ENCODE measurements at regions of chr19 and their contacts with region 1.

Region 1: DNA sequence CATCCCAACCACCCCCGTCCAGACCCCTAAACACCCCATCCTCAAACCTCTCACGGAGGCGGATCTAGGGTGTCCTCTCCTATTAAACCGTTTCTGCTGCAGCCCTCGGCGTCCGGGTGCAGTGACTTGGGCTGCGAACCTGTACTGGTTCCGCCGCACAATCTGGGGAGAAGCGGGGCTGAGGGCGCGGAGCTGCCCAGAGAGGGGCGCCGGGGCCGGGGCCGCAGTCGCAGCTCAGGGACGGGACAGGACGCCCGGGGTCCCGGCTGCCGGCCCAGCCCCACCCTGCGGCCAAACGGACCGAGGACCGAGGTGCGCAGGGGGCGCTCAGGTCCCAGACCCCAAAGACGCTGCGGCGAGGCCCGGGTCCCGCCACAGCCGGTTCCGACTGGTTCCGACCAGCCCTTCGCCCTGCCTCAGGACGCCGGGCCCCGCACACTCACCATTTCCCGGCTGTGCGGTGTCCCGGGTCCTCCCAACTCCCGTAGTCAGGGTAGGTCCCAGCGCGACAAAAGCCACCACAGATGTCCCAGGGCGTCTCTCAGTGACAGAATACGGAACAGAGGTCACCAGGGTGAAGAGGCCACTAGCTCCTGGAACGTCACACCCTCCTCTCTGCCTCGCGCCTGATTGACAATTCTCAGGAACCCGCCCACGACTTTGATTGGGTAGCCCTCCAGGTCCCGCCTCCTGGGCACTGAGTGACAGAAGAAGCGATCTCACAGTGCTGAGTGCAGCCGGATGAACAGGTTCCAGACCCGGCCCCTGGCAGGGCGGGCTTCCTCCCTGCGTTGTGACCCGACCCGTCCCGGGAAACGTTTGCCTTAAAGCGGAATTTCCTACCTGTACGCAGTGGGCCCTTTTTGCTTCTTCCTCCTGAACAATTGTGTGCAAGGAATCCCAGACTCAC is at the start of gene ZNF44:
- DNase-seq: peak; percentile 94
- ATAC-seq: peak; percentile 96
- H3K4me3 ChIP-seq: peak within 1 kb of the TSS; percentile 68 to 88
- H3K27ac ChIP-seq: peak within 1 kb of the TSS; percentile 62
- H3K4me1 ChIP-seq: peaks cover 5 to 18% of the 10 kb centered on the region in 2 experiments
- H3K27me3 ChIP-seq: no peaks in the 10 kb centered on the region
- CTCF ChIP-seq: no peak
- POLR2A ChIP-seq: no peak
- RAD21 ChIP-seq: no peak
- total RNA-seq, gene ZNF44: 3.6 TPM

Region 2: DNA sequence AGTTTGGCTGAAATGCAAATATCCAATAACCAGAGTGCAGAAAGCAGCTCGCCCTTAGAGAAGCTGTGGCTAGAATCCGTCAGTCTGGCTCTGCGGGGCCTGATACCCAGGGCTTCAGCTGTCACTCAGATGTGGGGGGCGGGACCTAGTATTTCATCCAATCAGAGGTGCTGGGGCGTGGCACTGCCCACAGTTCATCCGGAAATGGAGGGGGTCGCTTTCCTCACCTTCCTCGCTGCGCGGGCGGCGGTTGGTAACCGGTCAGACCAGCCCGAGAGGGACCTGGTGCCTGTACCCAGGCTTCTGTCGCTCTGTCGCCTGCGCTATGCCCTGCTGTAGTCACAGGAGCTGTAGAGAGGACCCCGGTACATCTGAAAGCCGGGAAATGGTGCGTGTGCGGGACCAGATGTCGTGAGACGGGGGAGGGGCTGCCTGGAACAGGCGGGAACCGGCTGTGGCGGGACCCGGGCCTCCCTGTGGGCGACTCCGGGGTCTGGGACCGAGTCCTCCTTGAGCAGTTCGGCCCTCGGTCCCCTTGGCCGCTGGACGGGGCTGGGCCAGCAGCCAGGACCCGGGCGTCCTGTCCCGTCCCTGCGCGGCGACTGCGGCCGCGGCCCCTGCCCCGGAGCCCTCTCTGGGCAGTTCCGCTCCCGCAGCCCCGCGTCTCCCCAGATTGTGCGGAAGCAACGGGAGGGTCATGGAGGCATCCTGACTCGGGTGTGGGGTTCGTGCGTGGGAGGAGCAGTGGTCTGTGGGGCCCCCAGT is 369.4 kb before region 1 on chr19 and contains the start of gene ZNF700:
- CTCF ChIA-PET with region 1: no interaction called
- POLR2A ChIA-PET with region 1: no interaction called
- RAD21 ChIA-PET with region 1: no interaction called
- intact Hi-C with region 1: loop called (anchors 5 kb)
- DNase-seq: peak; percentile 85
- ATAC-seq: peak; percentile 94
- H3K4me3 ChIP-seq: peak within 1 kb of the TSS; percentile 79 to 86
- H3K27ac ChIP-seq: peak within 1 kb of the TSS; percentile 94
- H3K4me1 ChIP-seq: peaks cover 0 to 22% of the 10 kb centered on the region in 2 experiments; a peak in 2 of 4 replicates
- H3K27me3 ChIP-seq: no peaks in the 10 kb centered on the region
- CTCF ChIP-seq: no peak
- POLR2A ChIP-seq: no peak
- RAD21 ChIP-seq: no peak
- total RNA-seq, gene ZNF700: 9.3 TPM

Region 3: GRCh38 chr19:12162882-12163806 is 131.4 kb before region 1 on chr19 and contains the start of gene ZNF136:
- CTCF ChIA-PET with region 1: no interaction called
- POLR2A ChIA-PET with region 1: no interaction called
- RAD21 ChIA-PET with region 1: no interaction called
- intact Hi-C with region 1: loop called (anchors 5 kb)
- DNase-seq: peak; percentile 89
- ATAC-seq: peak; percentile 98
- H3K4me3 ChIP-seq: peak within 1 kb of the TSS; percentile 76 to 80
- H3K27ac ChIP-seq: peak within 1 kb of the TSS; percentile 64
- H3K4me1 ChIP-seq: peaks cover 0 to 3% of the 10 kb centered on the region in 2 experiments; a peak in 1 of 4 replicates
- H3K27me3 ChIP-seq: no peaks in the 10 kb centered on the region
- CTCF ChIP-seq: no peak
- POLR2A ChIP-seq: no peak
- RAD21 ChIP-seq: no peak
- total RNA-seq, gene ZNF136: 4.0 TPM

Region 4: DNA sequence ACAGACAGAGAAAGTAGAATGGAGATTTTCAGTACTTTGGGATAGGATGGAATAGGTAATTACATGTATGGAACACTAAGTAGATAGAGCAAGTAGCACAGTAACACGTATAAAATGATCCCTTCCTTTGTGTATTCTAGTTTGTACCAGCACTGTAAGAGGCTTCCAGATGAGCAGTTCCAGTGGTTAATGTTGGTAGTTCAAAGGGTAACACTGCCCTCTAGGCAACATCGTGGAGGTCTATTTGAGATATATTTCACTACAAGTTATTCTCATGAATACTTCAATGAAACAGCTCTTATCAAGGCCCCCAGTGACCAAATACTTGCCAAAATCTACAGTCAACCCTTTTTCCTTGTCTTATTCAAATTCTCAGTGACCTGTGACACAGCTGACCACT is 52.4 kb after region 1 on chr19:
- CTCF ChIA-PET with region 1: no interaction called
- POLR2A ChIA-PET with region 1: no interaction called
- RAD21 ChIA-PET with region 1: no interaction called
- intact Hi-C with region 1: no loop called
- DNase-seq: no peak
- ATAC-seq: no peak
- H3K4me3 ChIP-seq: no peak overlapping the region
- H3K27ac ChIP-seq: no peak overlapping the region
- H3K4me1 ChIP-seq: no peaks in the 10 kb centered on the region
- H3K27me3 ChIP-seq: no peaks in the 10 kb centered on the region
- CTCF ChIP-seq: no peak
- POLR2A ChIP-seq: no peak
- RAD21 ChIP-seq: peak; percentile 35; the same call in 1 of the 2 replicates

Region 5: DNA sequence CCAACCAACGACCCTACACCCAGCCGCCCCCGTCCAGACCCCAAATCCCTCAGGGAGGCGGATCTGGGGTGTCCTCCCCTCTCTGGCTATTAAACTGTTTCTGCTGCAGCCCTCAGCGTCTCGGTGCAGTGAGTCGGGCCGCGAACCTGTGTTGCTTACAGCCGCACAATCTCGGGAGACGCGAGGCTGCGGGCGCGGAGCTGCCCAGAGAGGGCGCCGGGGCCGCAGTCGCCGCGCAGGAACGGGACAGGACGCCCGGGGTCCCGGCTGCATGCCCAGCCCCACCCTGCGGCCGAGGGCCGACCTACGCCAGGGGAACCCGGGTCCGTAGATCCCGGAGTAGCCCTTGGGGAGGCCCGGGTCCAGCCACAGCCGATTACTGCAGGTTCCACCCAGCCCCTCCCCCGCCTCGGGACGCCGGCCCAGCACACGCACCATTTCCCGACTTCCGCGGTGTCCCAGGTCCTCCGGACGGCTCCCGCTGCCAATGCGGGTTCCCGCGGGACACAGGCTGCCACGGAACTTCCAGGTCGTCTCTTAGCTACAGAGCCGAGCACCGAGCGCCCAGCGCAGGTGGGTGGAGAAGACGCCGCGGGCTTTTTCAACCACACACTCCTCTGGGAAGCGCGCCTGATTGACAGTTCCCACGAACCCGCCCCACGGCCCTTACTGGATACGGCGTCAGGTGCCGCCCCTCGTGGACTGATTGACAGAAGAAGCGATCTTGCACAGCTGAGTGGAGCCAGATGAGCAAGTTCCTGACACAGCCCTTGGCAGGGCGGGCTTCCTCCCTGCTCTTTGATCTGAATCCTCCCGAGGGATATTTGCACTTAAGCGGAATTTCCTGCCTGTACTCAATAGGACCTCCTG is 106.4 kb after region 1 on chr19 and contains the start of gene ZNF799:
- CTCF ChIA-PET with region 1: no interaction called
- POLR2A ChIA-PET with region 1: no interaction called
- RAD21 ChIA-PET with region 1: no interaction called
- intact Hi-C with region 1: loop called (anchors 2 kb)
- DNase-seq: peak; percentile 94
- ATAC-seq: peak; percentile 95
- H3K4me3 ChIP-seq: peak within 1 kb of the TSS; percentile 72 to 82
- H3K27ac ChIP-seq: peak within 1 kb of the TSS; percentile 76
- H3K4me1 ChIP-seq: peaks cover 3 to 9% of the 10 kb centered on the region in 2 experiments; a peak in 2 of 4 replicates
- H3K27me3 ChIP-seq: no peaks in the 10 kb centered on the region
- CTCF ChIP-seq: 0 out of 6 replicates have a peak, but pooled peaks of 1 of the 3 experiments have one; percentile 16
- POLR2A ChIP-seq: no peak
- RAD21 ChIP-seq: no peak
- total RNA-seq, gene ZNF799: 3.6 TPM

Region 6: GRCh38 chr19:12440541-12441316 is 146.2 kb after region 1 on chr19 and contains the start of gene ZNF443:
- CTCF ChIA-PET with region 1: no interaction called
- POLR2A ChIA-PET with region 1: no interaction called
- RAD21 ChIA-PET with region 1: no interaction called
- intact Hi-C with region 1: loop called (anchors 5 kb)
- DNase-seq: peak; percentile 95
- ATAC-seq: peak; percentile 95
- H3K4me3 ChIP-seq: peak within 1 kb of the TSS; percentile 68 to 74
- H3K27ac ChIP-seq: peak within 1 kb of the TSS; percentile 71
- H3K4me1 ChIP-seq: peaks cover 0 to 8% of the 10 kb centered on the region in 2 experiments; a peak in 2 of 4 replicates
- H3K27me3 ChIP-seq: no peaks in the 10 kb centered on the region
- CTCF ChIP-seq: no peak
- POLR2A ChIP-seq: peak; percentile 27
- RAD21 ChIP-seq: 0 out of 2 replicates have a peak, but pooled peaks have one; percentile 11
- total RNA-seq, gene ZNF443: 2.9 TPM

Region 7: GRCh38 chr19:12551060-12551832 is 256.7 kb after region 1 on chr19 and contains the start of gene ZNF564:
- CTCF ChIA-PET with region 1: no interaction called
- POLR2A ChIA-PET with region 1: no interaction called
- RAD21 ChIA-PET with region 1: no interaction called
- intact Hi-C with region 1: loop called (anchors 5 kb)
- DNase-seq: peak; percentile 98
- ATAC-seq: peak; percentile 97
- H3K4me3 ChIP-seq: peak within 1 kb of the TSS; percentile 86 to 90
- H3K27ac ChIP-seq: peak within 1 kb of the TSS; percentile 89
- H3K4me1 ChIP-seq: peaks cover 8 to 13% of the 10 kb centered on the region in 2 experiments
- H3K27me3 ChIP-seq: no peaks in the 10 kb centered on the region
- CTCF ChIP-seq: no peak
- POLR2A ChIP-seq: peak; percentile 65
- RAD21 ChIP-seq: no peak
- total RNA-seq, gene ZNF564: 6.1 TPM